ENCODE measurements at regions of chr11 and their contacts with region 1.

Region 1: GRCh38 chr11:14789879-14790484 is 102.0 kb downstream of the CYP2R1 start:
- DNase-seq: no peak
- CTCF ChIP-seq: peak; percentile 44

Region 2: DNA sequence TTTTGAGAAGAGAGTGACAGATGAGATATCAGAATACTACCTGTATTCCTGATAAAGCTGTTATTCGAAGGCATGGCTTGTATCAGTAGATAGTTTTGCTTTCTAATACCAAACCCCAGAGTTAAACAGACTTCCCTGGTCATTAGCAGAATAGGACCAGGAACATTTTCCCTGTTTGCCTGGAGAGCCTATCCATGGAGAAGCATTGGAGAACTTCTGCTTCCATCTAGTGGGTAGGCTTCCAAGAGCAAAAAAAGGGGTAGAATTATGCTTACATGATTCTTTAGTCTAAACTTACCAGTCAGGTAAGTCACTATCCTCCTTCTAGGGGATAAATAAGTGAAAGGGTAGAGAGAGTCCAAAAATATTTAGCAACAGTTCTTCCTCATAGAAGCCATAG is 132.1 kb before region 1 on chr11:
- CTCF ChIA-PET with region 1: no interaction called
- POLR2A ChIA-PET with region 1: no interaction called
- DNase-seq: no peak
- CTCF ChIP-seq: no peak

Region 3: GRCh38 chr11:14773755-14774154 is 16.2 kb before region 1 on chr11:
- CTCF ChIA-PET with region 1: interaction called, 11 read pairs
- POLR2A ChIA-PET with region 1: no interaction called
- DNase-seq: no peak
- CTCF ChIP-seq: no peak

Region 4: DNA sequence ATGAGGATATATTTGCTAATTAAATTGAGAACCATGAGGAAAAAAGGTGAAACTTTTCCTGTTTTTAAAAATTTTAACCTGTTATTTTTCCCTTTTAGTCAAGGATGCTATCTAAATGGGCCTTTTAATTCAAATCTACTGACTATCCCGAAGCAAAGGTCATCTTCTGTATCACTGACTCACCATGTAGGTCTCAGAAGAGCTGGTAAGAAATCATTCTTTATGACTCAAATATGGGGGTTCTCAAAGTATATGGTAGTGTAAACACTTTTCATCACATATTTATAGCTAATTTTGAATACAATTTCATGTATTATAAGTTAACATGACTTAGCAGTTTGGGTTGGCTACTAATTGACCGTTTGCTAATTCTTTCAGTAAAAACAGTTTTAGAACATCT is 13.9 kb after region 1 on chr11:
- CTCF ChIA-PET with region 1: interaction called, 12 read pairs
- POLR2A ChIA-PET with region 1: no interaction called
- DNase-seq: no peak
- CTCF ChIP-seq: no peak

Region 5: GRCh38 chr11:15006139-15006759 is 216.3 kb after region 1 on chr11:
- CTCF ChIA-PET with region 1: interaction called, 14 read pairs
- POLR2A ChIA-PET with region 1: no interaction called
- DNase-seq: peak; percentile 15
- CTCF ChIP-seq: peak; percentile 47

Region 6: GRCh38 chr11:15048616-15049015 is 258.6 kb after region 1 on chr11:
- CTCF ChIA-PET with region 1: no interaction called
- POLR2A ChIA-PET with region 1: no interaction called
- DNase-seq: no peak
- CTCF ChIP-seq: no peak

Region 7: DNA sequence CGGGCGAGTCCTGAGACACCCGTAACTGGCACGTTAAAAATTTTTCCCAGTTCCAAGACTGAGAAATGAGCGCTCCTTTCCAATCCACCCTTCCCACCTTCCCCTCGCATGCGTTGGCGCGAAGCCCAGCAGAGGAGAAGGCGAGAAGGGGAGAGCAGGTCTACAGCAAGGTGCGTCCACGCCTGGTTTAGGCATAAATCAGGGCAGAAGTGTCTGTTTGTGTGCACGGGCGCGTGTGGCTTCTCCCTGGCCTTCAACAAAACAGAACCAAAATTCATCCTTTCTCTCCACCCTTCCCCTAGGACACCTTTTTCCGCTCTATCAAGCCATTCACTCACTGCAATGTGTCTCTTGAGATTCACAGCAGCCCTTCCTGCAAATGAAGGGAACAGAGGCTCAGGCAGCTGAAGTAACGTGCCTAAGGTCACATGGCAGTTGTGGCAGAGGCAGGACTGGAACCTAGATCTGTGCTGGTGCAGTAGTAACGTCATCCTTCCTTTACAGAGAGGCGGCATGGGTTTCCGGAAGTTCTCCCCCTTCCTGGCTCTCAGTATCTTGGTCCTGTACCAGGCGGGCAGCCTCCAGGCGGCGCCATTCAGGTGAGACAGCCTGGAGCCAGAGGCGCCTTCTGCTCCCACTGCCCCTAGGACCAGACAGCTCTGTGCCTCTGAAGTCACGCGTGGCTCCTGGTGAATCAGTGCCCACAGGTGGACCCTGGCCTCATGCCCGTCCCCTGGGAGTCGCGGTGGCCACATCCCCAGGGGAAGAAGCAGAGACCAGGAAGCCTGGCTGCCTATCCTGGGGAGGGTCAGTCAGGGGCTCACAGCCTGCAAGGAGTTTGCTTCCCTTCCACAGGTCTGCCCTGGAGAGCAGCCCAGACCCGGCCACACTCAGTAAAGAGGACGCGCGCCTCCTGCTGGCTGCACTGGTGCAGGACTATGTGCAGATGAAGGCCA is 284.5 kb after region 1 on chr11:
- CTCF ChIA-PET with region 1: interaction called, 11 read pairs
- POLR2A ChIA-PET with region 1: no interaction called
- DNase-seq: peak; percentile 63
- CTCF ChIP-seq: peak; percentile 94

Measured in GM10248 (cell line).